ENCODE measurements at regions of chr9 and their contacts with region 1.

Region 1: DNA sequence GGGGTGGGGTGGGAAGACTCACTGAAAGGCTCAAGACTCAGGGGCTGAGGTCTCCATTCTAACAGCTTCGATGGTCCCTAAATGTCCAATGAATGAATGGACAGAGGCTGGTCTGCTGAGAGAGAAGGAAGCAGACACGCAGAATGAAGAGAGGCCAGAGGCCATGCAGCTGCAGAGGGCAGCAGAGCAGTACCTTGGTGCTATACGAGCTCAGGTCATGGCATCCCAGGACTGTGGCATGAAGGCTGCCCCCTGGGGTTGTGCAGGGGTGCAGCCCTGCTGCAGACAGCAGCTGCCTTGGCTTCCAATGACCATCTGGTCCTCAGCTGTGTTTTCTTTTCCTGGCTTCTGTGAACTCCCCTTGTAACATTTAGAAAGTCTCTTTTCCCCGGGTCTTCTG is 15.2 kb upstream of the CORO2A start:
- DNase-seq: no peak
- H3K4me3 ChIP-seq: no peak overlapping the region
- H3K27ac ChIP-seq: no peak overlapping the region
- H3K4me1 ChIP-seq: no peaks in the 10 kb centered on the region
- H3K27me3 ChIP-seq: no peaks in the 10 kb centered on the region
- CTCF ChIP-seq: no peak

Region 2: DNA sequence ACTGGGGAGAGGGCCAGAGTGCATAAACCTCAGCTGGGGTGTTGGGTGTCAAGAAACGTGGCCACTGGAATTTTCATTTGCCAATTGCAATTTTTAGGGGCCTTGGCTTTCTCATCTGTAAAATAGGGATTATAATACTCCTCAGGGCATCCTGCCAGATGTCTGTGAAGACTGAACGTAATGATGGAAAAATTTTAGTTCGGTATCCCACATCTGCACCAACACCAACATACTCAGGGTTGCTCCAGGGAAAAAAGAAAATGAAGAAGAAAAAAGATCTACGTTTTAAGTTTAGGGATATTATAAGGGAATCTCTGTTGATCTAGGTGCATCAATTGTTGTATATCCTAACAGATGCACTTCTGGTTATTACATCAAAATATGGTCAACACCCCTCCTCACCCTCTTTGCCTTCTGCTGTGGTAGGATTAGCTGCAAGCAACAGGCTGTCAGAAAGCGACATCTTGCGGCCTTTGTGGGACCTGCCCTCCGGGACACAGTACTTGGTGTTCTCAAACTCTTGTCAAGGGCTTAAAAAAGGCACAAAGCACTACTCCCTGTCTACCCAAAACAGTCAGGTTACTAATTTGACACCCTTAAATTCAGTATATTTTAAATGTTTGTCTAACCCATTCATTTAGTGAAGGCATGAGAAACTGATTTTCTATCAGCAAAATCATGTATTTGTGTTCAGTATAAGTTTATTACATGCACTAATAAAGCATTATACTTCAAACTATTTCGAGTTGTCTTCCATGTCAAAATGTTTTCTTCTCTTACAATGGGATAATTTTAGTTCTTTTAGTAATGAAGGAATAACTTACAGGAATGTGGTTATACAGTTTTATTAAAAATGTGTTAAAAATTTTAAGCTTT is 56.1 kb after region 1 on chr9:
- CTCF ChIA-PET with region 1: no interaction called
- dilution Hi-C with region 1: no loop called
- in situ Hi-C with region 1: no loop called
- intact Hi-C with region 1: loop called (anchors 1 kb)
- DNase-seq: peak; percentile 51
- H3K4me3 ChIP-seq: no peak overlapping the region
- H3K27ac ChIP-seq: no peak overlapping the region
- H3K4me1 ChIP-seq: no peaks in the 10 kb centered on the region
- H3K27me3 ChIP-seq: peaks cover 2% of the 10 kb centered on the region
- CTCF ChIP-seq: peak; percentile 98

Measured in mammary epithelial cell (primary cell).